ENCODE measurements at regions of chr4 and their contacts with region 1.

Region 1: DNA sequence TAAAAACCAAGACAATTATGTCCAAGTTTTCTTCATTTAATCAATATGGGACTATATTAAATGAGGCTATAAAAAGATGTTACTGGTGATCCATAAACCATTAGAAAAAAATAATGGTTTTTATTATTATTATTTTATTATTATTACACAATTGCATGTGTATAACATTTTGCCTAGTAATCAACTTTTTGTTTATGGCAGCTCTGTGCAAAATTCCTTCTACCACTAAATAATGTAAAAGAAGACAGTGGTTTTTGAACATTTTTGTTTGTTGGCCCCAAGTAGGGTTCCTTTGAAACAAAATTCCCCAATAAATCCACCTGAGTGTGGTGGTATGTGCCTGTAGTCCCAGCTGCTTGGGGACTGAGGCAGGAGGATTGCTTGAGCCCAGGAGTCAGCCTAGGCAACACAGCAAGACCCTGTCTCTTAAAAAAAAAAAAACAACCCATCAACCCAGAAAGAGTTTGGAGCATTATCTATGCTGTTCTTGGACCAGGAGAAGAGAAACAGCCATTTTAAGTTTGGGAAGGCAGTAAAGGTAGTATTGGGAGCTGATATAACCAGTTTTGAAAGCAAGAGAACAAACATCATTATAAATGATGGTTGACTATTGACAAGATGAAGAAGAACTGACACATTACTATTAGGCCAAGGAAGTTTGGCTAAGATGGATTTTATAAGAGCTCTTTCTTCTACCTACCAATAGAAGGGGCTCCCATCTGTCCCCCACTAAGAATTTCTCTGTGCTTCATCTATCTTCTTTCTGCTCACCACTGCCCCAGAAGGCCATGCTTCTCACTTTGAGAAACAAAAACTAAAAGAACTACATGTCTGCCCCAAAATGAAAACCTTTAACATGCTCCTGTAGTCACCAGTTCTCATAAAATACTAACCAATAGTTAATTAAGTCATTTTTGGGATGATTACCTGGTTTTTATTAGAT is 2.2 kb downstream of the TMEM156 start:
- DNase-seq: peak in 2 of 5 donors; percentile 10 to 22
- H3K4me3 ChIP-seq: peak overlapping the region; percentile 58
- H3K4me3 Mint-ChIP-seq: peak overlapping the region; percentile 79 to 91 (median 84)
- H3K27ac ChIP-seq: peak overlapping the region; percentile 56
- H3K27ac Mint-ChIP-seq: peak overlapping the region; percentile 75 to 96 (median 88)
- H3K4me1 ChIP-seq: peaks cover 46% of the 10 kb centered on the region
- H3K4me1 Mint-ChIP-seq: peaks cover 43 to 66% (median 64%) of the 10 kb centered on the region in 3 donors
- H3K27me3 ChIP-seq: no peaks in the 10 kb centered on the region
- H3K27me3 Mint-ChIP-seq: no peaks in the 10 kb centered on the region

Region 2: GRCh38 chr4:39004758-39005157 is 25.3 kb before region 1 on chr4:
- CTCF ChIA-PET with region 1: no interaction called
- POLR2A ChIA-PET with region 1: no interaction called
- DNase-seq: no peak
- H3K4me3 ChIP-seq: no peak overlapping the region
- H3K4me3 Mint-ChIP-seq: no peak overlapping the region
- H3K27ac ChIP-seq: no peak overlapping the region
- H3K27ac Mint-ChIP-seq: peak overlapping the region in 1 of 8 donors; percentile 79
- H3K4me1 ChIP-seq: no peaks in the 10 kb centered on the region
- H3K4me1 Mint-ChIP-seq: peaks cover 24 to 31% (median 27%) of the 10 kb centered on the region in 3 donors
- H3K27me3 ChIP-seq: no peaks in the 10 kb centered on the region
- H3K27me3 Mint-ChIP-seq: no peaks in the 10 kb centered on the region

Region 3: DNA sequence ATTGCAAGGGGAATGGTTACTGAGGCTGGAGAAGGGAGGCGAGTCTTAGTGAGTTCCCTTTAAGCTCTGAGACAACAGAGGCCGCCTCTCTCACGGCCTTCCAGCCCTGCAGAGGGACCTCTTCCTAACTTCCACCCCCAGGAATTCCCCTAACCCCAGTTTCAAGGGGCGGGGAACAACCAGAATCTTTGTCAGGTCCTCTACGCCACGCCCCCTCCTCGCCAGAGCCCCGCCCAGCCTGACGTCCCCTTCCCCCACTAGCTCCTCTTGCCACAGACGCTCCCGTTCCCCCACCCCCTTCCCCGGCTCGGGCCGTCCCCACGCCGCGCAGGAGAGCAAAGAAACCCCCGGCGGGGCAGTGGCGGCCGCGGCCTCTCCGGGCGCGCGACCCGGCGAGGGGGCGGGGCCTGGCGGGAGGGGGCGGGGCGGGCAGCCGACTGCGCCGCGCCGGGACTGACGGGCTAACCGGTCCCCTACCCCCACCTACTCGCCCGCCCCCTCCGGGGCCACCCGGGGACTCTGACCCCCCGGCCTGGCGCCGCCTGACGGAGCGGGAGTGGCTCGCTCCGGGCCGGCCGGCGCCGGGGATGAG is 14.4 kb after region 1 on chr4:
- CTCF ChIA-PET with region 1: interaction called, 14 read pairs
- POLR2A ChIA-PET with region 1: interaction called, 10 read pairs
- DNase-seq: peak; percentile 86 to 96 (median 93)
- H3K4me3 ChIP-seq: peak overlapping the region; percentile 65
- H3K4me3 Mint-ChIP-seq: peak overlapping the region; percentile 91 to 96 (median 95)
- H3K27ac ChIP-seq: peak overlapping the region; percentile 72
- H3K27ac Mint-ChIP-seq: peak overlapping the region; percentile 93 to 99 (median 96)
- H3K4me1 ChIP-seq: peaks cover 40% of the 10 kb centered on the region
- H3K4me1 Mint-ChIP-seq: peaks cover 48 to 60% (median 57%) of the 10 kb centered on the region in 3 donors
- H3K27me3 ChIP-seq: no peaks in the 10 kb centered on the region
- H3K27me3 Mint-ChIP-seq: peaks cover 0 to 3% of the 10 kb centered on the region in 2 donors

Measured in CD8-positive, alpha-beta memory T cell (primary cell).